Naive thymus-derived CD4-positive, alpha-beta T cell (primary cell): ENCODE measurements at regions of chr19 and their contacts with region 1.

Region 1: GRCh38 chr19:34171877-34172660 is at the start of gene LSM14A:
- DNase-seq: peak; percentile 90 to 97 (median 95)
- ATAC-seq: peak; percentile 94
- H3K4me3 ChIP-seq: peak within 1 kb of the TSS; percentile 94
- H3K4me3 Mint-ChIP-seq: peak within 1 kb of the TSS; percentile 91 to 100 (median 96)
- H3K27ac ChIP-seq: peak within 1 kb of the TSS; percentile 95
- H3K27ac Mint-ChIP-seq: peak within 1 kb of the TSS; percentile 96 to 99 (median 99)
- H3K4me1 ChIP-seq: peaks cover 27 to 29% of the 10 kb centered on the region in 2 donors
- H3K4me1 Mint-ChIP-seq: peaks cover 29 to 51% (median 44%) of the 10 kb centered on the region in 7 donors
- H3K27me3 ChIP-seq: no peaks in the 10 kb centered on the region
- H3K27me3 Mint-ChIP-seq: no peaks in the 10 kb centered on the region
- total RNA-seq, gene LSM14A: 124 to 189 (median 166) TPM

Region 2: GRCh38 chr19:34134190-34135053 is 37.6 kb before region 1 on chr19:
- CTCF ChIA-PET with region 1: no interaction called
- POLR2A ChIA-PET with region 1: interaction called, 12 read pairs
- intact Hi-C with region 1: loop called in 1 of 2 experiments (anchors 1 kb)
- DNase-seq: peak; percentile 79 to 92 (median 87)
- ATAC-seq: peak; percentile 99
- H3K4me3 ChIP-seq: peak overlapping the region; percentile 91
- H3K4me3 Mint-ChIP-seq: peak overlapping the region; percentile 94 to 97 (median 95)
- H3K27ac ChIP-seq: peak overlapping the region; percentile 91
- H3K27ac Mint-ChIP-seq: peak overlapping the region; percentile 90 to 96 (median 91)
- H3K4me1 ChIP-seq: peaks cover 0 to 7% of the 10 kb centered on the region in 2 donors
- H3K4me1 Mint-ChIP-seq: peaks cover 3 to 11% (median 8%) of the 10 kb centered on the region in 7 donors
- H3K27me3 ChIP-seq: no peaks in the 10 kb centered on the region
- H3K27me3 Mint-ChIP-seq: peaks cover 0 to 3% (median 0%) of the 10 kb centered on the region in 5 donors

Region 3: DNA sequence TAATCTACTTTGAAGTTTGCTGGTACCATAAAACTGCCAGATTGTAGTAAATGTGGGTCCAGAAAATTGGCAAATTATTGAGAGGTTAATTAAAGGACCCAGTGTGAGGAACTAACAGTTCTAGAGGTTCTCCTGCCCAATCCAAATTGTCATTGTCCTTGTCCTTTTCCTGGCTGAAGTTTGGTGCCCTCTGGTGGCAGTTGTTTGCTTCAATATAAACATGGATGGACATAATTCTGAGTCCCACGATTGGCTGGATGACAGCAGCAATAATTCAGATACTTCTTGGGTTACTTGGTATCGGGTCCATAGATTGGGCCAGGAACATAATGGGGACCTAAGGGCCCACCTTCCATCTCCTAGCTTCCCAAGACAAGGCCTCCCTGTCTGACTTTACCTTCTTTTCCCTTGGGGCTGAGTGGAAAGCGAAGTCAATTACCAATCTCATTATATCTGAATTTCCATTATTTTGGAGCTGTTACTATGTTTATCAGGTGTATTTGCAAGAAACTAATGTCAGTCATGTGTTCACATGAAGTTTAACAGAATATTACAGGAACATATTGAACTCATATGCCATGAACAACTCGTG is 48.5 kb after region 1 on chr19:
- CTCF ChIA-PET with region 1: interaction called, 4 read pairs
- POLR2A ChIA-PET with region 1: interaction called, 34 read pairs
- intact Hi-C with region 1: loop called (anchors 1 kb)
- DNase-seq: peak; percentile 21 to 58 (median 47)
- ATAC-seq: no peak
- H3K4me3 ChIP-seq: no peak overlapping the region
- H3K4me3 Mint-ChIP-seq: peak overlapping the region in 4 of 10 donors; percentile 3 to 29 (median 10)
- H3K27ac ChIP-seq: no peak overlapping the region
- H3K27ac Mint-ChIP-seq: peak overlapping the region in 8 of 9 donors; percentile 31 to 89 (median 76)
- H3K4me1 ChIP-seq: peaks cover 19 to 24% of the 10 kb centered on the region in 2 donors
- H3K4me1 Mint-ChIP-seq: peaks cover 23 to 79% (median 58%) of the 10 kb centered on the region in 7 donors
- H3K27me3 ChIP-seq: no peaks in the 10 kb centered on the region
- H3K27me3 Mint-ChIP-seq: no peaks in the 10 kb centered on the region

Region 4: DNA sequence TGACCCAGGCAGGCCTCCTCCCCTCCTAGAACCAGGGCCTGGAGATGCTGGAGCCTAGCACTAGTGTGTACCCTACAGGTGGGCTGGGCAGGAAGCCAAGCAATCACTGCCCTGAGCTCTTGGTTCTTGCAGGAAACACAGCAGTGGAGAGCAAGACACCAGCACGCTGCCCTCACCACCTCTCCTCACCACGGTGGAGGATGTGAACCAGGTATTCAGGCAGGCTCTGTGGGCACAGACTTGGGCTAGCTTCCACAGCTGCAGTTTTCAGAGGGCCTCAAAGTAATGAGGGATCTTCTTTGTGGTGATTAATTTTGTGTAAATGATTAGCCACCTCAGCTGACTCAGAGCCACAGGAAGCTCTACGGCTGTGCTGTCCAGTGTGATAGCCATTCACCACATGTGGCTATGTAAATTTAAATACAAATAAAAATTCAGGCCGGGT is 179.3 kb after region 1 on chr19:
- CTCF ChIA-PET with region 1: no interaction called
- POLR2A ChIA-PET with region 1: interaction called, 6 read pairs
- intact Hi-C with region 1: loop called (anchors 1 to 2 kb)
- DNase-seq: peak in 1 of 9 donors; percentile 16
- ATAC-seq: no peak
- H3K4me3 ChIP-seq: no peak overlapping the region
- H3K4me3 Mint-ChIP-seq: peak overlapping the region in 7 of 10 donors; percentile 12 to 75 (median 45)
- H3K27ac ChIP-seq: peak overlapping the region; percentile 43
- H3K27ac Mint-ChIP-seq: peak overlapping the region in 8 of 9 donors; percentile 76 to 91 (median 86)
- H3K4me1 ChIP-seq: peaks cover 18 to 25% of the 10 kb centered on the region in 2 donors
- H3K4me1 Mint-ChIP-seq: peaks cover 13 to 41% (median 26%) of the 10 kb centered on the region in 7 donors
- H3K27me3 ChIP-seq: no peaks in the 10 kb centered on the region
- H3K27me3 Mint-ChIP-seq: no peaks in the 10 kb centered on the region

Region 5: DNA sequence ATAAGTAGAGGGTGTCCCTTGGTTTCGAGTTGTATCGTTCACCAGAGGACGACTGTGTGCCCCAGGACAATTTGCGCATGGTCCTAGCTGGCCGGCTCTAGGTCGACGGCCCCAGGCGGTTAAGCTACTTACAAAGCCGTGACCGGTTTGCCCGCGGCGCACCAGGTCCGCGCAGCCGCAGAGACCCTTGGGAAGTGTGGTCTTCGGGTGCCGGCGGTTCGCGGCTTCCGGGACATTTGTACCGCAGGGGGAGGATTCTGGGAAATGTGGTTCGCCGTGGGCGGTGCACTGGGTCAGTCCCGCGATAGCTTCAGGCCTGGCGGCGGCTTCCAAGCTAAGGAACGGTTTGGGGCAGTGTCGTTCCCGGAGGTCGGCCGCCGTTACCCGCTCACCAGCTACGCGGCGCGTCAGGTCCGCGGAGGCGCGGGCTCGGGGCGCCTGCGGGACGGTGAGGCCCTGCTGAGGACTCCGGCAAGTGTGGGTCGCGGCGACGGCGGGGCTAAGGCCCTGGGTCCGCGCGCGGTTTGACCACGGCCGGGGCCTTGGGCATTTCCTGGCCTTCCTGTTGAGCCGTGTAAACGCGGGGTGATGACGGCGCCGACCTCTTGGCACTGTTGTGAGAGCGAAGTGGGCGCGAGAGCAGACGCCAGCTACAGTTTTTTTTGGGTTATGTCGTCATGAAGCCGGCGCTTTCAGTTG is 505.5 kb after region 1 on chr19 and contains the start of gene ZNF302:
- CTCF ChIA-PET with region 1: no interaction called
- POLR2A ChIA-PET with region 1: interaction called, 3 read pairs
- intact Hi-C with region 1: loop called in 1 of 2 experiments (anchors 5 kb)
- DNase-seq: peak; percentile 87 to 96 (median 94)
- ATAC-seq: peak; percentile 95
- H3K4me3 ChIP-seq: peak within 1 kb of the TSS; percentile 93
- H3K4me3 Mint-ChIP-seq: peak within 1 kb of the TSS; percentile 92 to 99 (median 96)
- H3K27ac ChIP-seq: peak within 1 kb of the TSS; percentile 80
- H3K27ac Mint-ChIP-seq: peak within 1 kb of the TSS; percentile 94 to 100 (median 99)
- H3K4me1 ChIP-seq: peaks cover 14 to 15% of the 10 kb centered on the region in 2 donors
- H3K4me1 Mint-ChIP-seq: peaks cover 20 to 56% (median 35%) of the 10 kb centered on the region in 7 donors
- H3K27me3 ChIP-seq: no peaks in the 10 kb centered on the region
- H3K27me3 Mint-ChIP-seq: peaks cover 9 to 18% (median 12%) of the 10 kb centered on the region in 5 donors
- total RNA-seq, gene ZNF302: 13.6 to 61.4 (median 25.7) TPM